ENCODE measurements at regions of chr11 and their contacts with region 1.

Region 1: DNA sequence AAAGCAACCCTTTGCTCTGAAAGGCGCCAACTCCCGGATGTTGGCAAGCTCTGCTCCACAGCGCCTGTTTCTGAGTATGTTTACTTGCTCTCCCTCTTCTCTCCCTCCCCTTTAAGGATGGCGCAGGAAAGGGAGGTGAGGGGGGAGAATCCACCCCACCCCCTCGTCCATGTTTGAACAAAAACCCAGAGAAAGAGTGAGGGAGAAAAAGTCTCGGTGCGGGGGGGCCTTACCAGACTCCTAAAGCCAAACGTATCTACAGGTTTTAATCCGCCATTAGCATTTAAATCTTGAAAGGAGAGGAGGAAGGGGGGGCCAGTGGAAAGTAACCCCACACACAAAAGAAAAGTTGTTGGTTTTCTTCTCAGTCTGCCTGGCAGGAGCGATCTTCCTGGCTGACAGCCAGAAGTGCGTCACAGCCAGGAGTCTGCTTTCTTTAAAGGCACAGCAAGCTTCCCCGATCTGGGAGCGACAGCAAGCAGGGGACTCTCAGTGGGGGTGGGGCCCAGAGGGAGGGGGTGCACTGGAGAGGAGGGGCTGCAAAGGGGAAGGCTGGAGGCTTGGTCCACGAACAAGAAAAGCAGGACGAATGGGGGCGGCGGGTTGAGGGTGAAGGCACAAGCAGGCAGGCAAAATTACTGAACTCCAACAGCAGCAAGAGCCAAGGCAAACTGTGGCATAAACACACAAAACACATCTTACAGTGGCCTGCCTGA is 39.5 kb downstream of the NUMA1 start:
- ATAC-seq: peak; percentile 61 to 81 (median 74)
- H3K4me3 ChIP-seq: peak overlapping the region; percentile 38 to 65 (median 49)
- H3K27ac ChIP-seq: peak overlapping the region; percentile 93 to 95
- H3K4me1 ChIP-seq: peaks cover 41 to 44% of the 10 kb centered on the region in 2 donors

Region 2: GRCh38 chr11:72091005-72091691 is 50.3 kb after region 1 on chr11:
- in situ Hi-C with region 1: loop called in 1 of 9 experiments (anchors 10 kb)
- ATAC-seq: peak; percentile 67 to 95 (median 82)
- H3K4me3 ChIP-seq: no peak overlapping the region
- H3K27ac ChIP-seq: no peak overlapping the region
- H3K4me1 ChIP-seq: peaks cover 0 to 2% of the 10 kb centered on the region in 2 donors